ENCODE measurements at regions of chr10 and their contacts with region 1.

Region 1: GRCh38 chr10:73940634-73941221 is 29.8 kb downstream of the PLAU start:
- DNase-seq: peak; percentile 87
- H3K4me3 Mint-ChIP-seq: no peak overlapping the region
- H3K27ac Mint-ChIP-seq: no peak overlapping the region
- H3K4me1 Mint-ChIP-seq: peaks cover 5% of the 10 kb centered on the region
- H3K27me3 Mint-ChIP-seq: no peaks in the 10 kb centered on the region

Region 2: DNA sequence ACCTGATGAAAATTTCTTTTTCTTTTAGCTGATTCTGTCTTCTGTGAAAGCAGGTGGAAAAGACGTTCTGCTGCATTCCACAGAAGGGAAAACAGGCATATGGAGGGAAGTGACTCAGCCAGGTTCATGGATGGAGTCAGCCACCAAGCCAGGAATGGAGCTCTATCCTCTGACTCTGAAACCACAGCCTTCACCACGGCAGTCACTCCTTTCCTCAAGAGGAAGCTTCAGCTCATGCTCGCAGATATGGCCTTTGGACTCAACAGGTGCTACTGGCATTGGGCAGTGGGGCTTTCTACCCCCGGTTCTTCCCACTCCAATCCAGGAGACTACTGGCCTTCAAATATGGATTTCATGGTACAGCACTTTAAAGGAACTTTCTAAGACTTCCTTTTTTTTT is 41.3 kb before region 1 on chr10:
- CTCF ChIA-PET with region 1: interaction called, 396 read pairs
- intact Hi-C with region 1: no loop called
- DNase-seq: no peak
- H3K4me3 Mint-ChIP-seq: no peak overlapping the region
- H3K27ac Mint-ChIP-seq: no peak overlapping the region
- H3K4me1 Mint-ChIP-seq: peaks cover 3% of the 10 kb centered on the region
- H3K27me3 Mint-ChIP-seq: peaks cover 4% of the 10 kb centered on the region

Region 3: GRCh38 chr10:73916761-73917470 is 23.8 kb before region 1 on chr10:
- CTCF ChIA-PET with region 1: interaction called, 21 read pairs
- intact Hi-C with region 1: no loop called
- DNase-seq: no peak
- H3K4me3 Mint-ChIP-seq: no peak overlapping the region
- H3K27ac Mint-ChIP-seq: no peak overlapping the region
- H3K4me1 Mint-ChIP-seq: peaks cover 13% of the 10 kb centered on the region
- H3K27me3 Mint-ChIP-seq: peaks cover 14% of the 10 kb centered on the region

Region 4: GRCh38 chr10:73956476-73957359 is 16.0 kb after region 1 on chr10:
- CTCF ChIA-PET with region 1: interaction called, 26 read pairs
- intact Hi-C with region 1: no loop called
- DNase-seq: peak; percentile 59
- H3K4me3 Mint-ChIP-seq: peak overlapping the region; percentile 36
- H3K27ac Mint-ChIP-seq: peak overlapping the region; percentile 79
- H3K4me1 Mint-ChIP-seq: peaks cover 43% of the 10 kb centered on the region
- H3K27me3 Mint-ChIP-seq: no peaks in the 10 kb centered on the region

Region 5: GRCh38 chr10:74081192-74081803 is 140.6 kb after region 1 on chr10:
- CTCF ChIA-PET with region 1: interaction called, 17 read pairs
- intact Hi-C with region 1: loop called (anchors 5 kb)
- DNase-seq: peak; percentile 56
- H3K4me3 Mint-ChIP-seq: no peak overlapping the region
- H3K27ac Mint-ChIP-seq: no peak overlapping the region
- H3K4me1 Mint-ChIP-seq: peaks cover 23% of the 10 kb centered on the region
- H3K27me3 Mint-ChIP-seq: no peaks in the 10 kb centered on the region